ENCODE measurements at regions of chr16 and their contacts with region 1.

Region 1: GRCh38 chr16:68328151-68328859 is 17.5 kb downstream of the PRMT7 start:
- DNase-seq: peak; percentile 72
- ATAC-seq: peak; percentile 98
- H3K4me3 ChIP-seq: no peak overlapping the region
- H3K27ac ChIP-seq: no peak overlapping the region
- H3K4me1 ChIP-seq: peaks cover 6 to 7% of the 10 kb centered on the region in 2 experiments; a peak in 3 of 4 replicates
- H3K27me3 ChIP-seq: no peaks in the 10 kb centered on the region
- CTCF ChIP-seq: peak; percentile 92 to 94 (median 94)
- POLR2A ChIP-seq: no peak
- RAD21 ChIP-seq: peak; percentile 96

Region 2: GRCh38 chr16:68244903-68245853 is 83.1 kb before region 1 on chr16 and contains the start of gene PLA2G15:
- CTCF ChIA-PET with region 1: no interaction called
- POLR2A ChIA-PET with region 1: no interaction called
- RAD21 ChIA-PET with region 1: no interaction called
- intact Hi-C with region 1: loop called (anchors 1 kb)
- DNase-seq: peak; percentile 83
- ATAC-seq: peak; percentile 96
- H3K4me3 ChIP-seq: peak within 1 kb of the TSS; percentile 81 to 85
- H3K27ac ChIP-seq: peak within 1 kb of the TSS; percentile 41; the same call in 1 of the 2 replicates
- H3K4me1 ChIP-seq: peaks cover 5 to 21% of the 10 kb centered on the region in 2 experiments; a peak in 3 of 4 replicates
- H3K27me3 ChIP-seq: no peaks in the 10 kb centered on the region
- CTCF ChIP-seq: no peak
- POLR2A ChIP-seq: no peak
- RAD21 ChIP-seq: no peak
- total RNA-seq, gene PLA2G15: 7.5 TPM

Region 3: GRCh38 chr16:68310761-68311511 is 17.4 kb before region 1 on chr16 and contains the starts of genes PRMT7 and SLC7A6OS:
- CTCF ChIA-PET with region 1: no interaction called
- POLR2A ChIA-PET with region 1: no interaction called
- RAD21 ChIA-PET with region 1: no interaction called
- intact Hi-C with region 1: no loop called
- DNase-seq: peak; percentile 74
- ATAC-seq: peak; percentile 97
- H3K4me3 ChIP-seq: peak within 1 kb of the TSS; percentile 96 to 97
- H3K27ac ChIP-seq: peak within 1 kb of the TSS; percentile 70
- H3K4me1 ChIP-seq: peaks cover 7 to 17% of the 10 kb centered on the region in 2 experiments; a peak in 3 of 4 replicates
- H3K27me3 ChIP-seq: no peaks in the 10 kb centered on the region
- CTCF ChIP-seq: no peak
- POLR2A ChIP-seq: peak; percentile 89
- RAD21 ChIP-seq: no peak
- total RNA-seq, gene PRMT7: 34.4 TPM
- total RNA-seq, gene SLC7A6OS: 16.4 TPM

Region 4: DNA sequence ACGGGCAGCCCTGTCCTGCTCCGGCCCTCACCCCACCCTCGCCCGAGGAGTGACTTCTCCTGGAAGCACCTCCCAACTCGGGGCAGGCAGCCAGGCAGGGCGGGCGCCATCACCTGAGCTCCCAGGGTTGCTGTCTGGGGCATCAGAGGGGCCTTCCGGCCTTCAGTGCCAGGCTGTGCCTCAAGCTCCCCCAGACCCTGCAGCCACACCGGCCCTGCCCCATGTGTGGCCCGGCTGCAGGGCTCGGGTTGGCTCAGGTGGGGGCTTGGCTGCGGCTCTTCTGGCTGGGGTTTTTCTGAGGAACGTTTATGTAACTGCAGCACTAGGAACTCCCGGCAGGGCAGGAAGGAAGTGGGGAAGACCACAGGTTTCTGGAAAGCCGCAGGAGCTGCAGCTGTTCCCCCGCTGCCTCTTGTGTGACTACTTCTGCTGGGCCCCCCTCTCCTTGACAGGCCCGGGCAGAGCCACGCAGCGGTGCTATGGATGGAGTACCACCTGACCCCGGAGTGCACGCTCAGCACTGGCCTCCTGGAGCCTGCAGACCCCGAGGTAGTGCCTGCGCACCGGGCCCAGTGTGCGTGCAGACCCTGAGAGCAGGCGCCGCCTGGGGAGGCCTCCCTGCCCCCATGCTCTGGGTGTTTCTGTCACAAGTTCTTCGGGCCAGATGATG is 28.1 kb after region 1 on chr16:
- CTCF ChIA-PET with region 1: no interaction called
- POLR2A ChIA-PET with region 1: no interaction called
- RAD21 ChIA-PET with region 1: no interaction called
- intact Hi-C with region 1: no loop called
- DNase-seq: no peak
- ATAC-seq: no peak
- H3K4me3 ChIP-seq: no peak overlapping the region
- H3K27ac ChIP-seq: no peak overlapping the region
- H3K4me1 ChIP-seq: no peaks in the 10 kb centered on the region
- H3K27me3 ChIP-seq: no peaks in the 10 kb centered on the region
- CTCF ChIP-seq: no peak
- POLR2A ChIP-seq: no peak
- RAD21 ChIP-seq: no peak

Region 5: DNA sequence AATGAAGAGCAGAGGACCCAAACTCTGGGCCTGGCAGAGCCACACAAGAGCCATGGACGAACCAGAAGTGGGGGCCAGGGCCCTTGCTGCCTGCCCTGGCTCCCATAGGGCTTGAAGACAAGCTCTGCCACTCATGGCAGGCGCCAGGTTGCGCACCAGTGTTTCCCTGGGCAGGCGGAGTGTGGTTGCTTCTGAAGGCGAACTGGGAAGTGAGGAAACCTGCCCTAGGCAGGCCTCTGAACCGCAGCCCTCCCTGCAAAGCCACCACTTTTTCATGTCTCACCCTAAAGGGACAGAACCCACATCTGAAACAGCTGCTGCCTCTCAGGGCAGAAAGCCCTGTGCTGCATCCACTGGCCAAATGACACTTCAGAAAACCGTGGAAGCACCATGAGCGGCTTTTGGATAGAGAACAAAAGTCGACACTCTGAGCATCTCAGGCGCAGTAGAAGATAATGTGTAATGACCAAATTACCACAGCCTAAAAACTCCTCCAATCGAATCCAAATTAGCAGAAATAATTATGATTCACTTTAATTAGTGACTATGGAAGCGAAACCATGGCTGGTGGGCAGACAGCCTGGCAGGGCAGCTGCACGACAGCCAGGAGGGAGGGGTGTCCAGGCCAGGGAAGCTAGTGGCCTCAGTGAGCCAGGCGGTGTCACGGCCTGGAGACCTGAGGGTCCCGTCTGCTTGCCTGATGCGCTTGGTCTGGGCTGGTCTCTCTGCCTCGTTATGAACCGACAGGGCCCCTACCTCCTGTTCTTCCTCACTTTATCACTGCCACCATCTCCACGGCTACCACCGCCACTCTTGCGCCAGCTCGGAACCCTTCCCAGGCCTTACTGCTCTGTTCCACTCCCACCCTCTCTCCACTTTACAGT is 41.6 kb after region 1 on chr16:
- CTCF ChIA-PET with region 1: no interaction called
- POLR2A ChIA-PET with region 1: no interaction called
- RAD21 ChIA-PET with region 1: no interaction called
- intact Hi-C with region 1: no loop called
- DNase-seq: no peak
- ATAC-seq: no peak
- H3K4me3 ChIP-seq: no peak overlapping the region
- H3K27ac ChIP-seq: no peak overlapping the region
- H3K4me1 ChIP-seq: peaks cover 0 to 6% of the 10 kb centered on the region in 2 experiments; a peak in 1 of 4 replicates
- H3K27me3 ChIP-seq: no peaks in the 10 kb centered on the region
- CTCF ChIP-seq: no peak
- POLR2A ChIP-seq: no peak
- RAD21 ChIP-seq: no peak

Measured in HCT116 (cell line).